BJ (cell line): ENCODE measurements at regions of chr1 and their contacts with region 1.

Region 1: DNA sequence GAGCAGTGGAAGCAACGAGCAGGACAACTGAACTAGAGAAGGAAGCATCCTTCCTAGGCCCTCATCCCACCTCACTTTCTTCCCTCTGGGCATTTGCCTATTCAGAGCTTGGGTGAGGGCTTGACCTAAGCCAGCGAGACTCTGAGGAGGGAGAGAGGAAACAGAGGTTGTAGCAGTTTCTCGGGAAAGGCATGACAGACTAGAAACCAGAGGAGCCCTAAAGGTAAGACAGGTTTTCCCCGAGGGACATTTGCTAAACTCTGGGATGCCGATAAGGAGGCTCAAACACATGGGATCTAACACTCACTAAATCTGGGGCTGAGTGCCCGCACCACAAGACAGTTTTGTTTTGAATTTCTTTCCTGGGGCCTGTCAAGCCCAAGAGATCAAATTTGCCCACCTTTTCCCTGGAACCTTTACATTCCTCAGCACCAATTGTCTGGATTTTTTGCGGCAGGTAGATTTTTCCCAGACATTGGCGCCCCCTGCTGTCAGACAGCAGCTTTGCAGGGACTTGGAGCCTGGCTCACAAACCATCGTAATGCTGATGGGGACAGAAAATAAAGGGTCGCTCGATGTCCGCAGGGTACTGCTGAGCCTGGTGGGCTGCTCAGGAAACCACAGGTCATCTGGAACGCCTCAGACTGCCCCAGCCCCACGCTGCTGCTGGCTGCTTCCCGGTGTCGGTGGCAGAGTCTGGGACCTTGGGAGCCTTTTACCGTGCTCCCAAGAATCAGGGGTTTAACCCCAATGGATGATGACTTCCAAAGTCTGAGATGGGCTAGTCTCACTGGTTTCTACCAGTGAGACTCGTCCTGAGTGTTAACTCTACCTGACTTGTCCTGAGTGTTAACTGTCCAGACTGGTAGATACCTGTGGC is 23.4 kb upstream of the TSPAN2 start:
- DNase-seq: no peak
- H3K4me3 ChIP-seq: no peak overlapping the region
- H3K27me3 ChIP-seq: no peaks in the 10 kb centered on the region
- CTCF ChIP-seq: peak; percentile 93

Region 2: GRCh38 chr1:114986286-114986685 is 126.5 kb before region 1 on chr1:
- CTCF ChIA-PET with region 1: interaction called, 38 read pairs
- POLR2A ChIA-PET with region 1: no interaction called
- DNase-seq: no peak
- H3K4me3 ChIP-seq: no peak overlapping the region
- H3K27me3 ChIP-seq: no peaks in the 10 kb centered on the region
- CTCF ChIP-seq: no peak

Region 3: GRCh38 chr1:115098979-115099692 is 13.6 kb before region 1 on chr1:
- CTCF ChIA-PET with region 1: interaction called, 21 read pairs
- POLR2A ChIA-PET with region 1: no interaction called
- DNase-seq: no peak
- H3K4me3 ChIP-seq: no peak overlapping the region
- H3K27me3 ChIP-seq: no peaks in the 10 kb centered on the region
- CTCF ChIP-seq: no peak

Region 4: DNA sequence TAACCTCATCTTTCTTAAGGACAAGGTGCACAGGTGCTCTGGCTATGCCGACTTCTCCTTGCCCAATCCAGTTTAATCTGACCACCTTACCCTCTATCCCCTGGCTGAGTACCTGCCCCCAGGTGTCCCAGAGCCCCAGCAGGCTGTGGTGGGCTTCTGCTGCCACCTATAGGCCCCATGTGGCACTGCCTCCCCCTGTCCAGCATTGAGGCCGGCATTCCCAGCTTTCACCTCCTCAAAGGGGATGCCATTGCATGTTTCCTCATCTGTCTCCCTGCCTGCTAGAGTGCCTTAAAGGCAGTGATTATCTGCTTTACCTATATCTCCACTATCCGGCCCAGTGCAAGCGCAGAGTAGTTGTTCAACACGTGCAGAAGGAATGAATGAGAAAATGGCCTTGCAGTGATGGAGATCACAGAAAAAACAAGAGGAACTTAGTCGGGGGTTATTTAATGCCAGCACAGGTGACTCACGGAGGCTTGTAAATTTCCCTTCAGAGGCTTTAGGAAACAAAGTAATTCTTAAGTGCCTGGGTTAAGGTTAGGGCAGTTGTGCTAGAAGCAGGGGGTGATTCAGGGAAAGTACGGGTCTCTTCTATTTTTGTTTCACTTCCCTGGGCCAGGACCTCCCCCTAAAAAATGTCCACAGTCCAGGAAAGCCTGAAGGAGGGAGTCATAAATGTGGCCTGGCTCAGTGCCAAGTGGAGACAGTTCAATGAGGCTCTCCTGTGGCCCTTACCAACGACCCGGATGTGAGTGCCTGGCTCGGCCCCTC is 357.2 kb after region 1 on chr1:
- CTCF ChIA-PET with region 1: interaction called, 14 read pairs
- POLR2A ChIA-PET with region 1: no interaction called
- DNase-seq: no peak
- H3K4me3 ChIP-seq: no peak overlapping the region
- H3K27me3 ChIP-seq: no peaks in the 10 kb centered on the region
- CTCF ChIP-seq: peak; percentile 98